Gastrocnemius medialis (tissue), 4 donors: ENCODE measurements at regions of chr19 and their contacts with region 1.

Region 1: GRCh38 chr19:46704379-46705076 is 12.4 kb downstream of the PRKD2 start:
- DNase-seq: peak; percentile 24 to 56
- ATAC-seq: peak; percentile 26 to 71
- H3K4me3 ChIP-seq: no peak overlapping the region
- H3K27ac ChIP-seq: no peak overlapping the region
- H3K4me1 ChIP-seq: no peaks in the 10 kb centered on the region
- H3K27me3 ChIP-seq: no peaks in the 10 kb centered on the region
- CTCF ChIP-seq: peak; percentile 81 to 97 (median 94)
- POLR2A ChIP-seq: no peak

Region 2: DNA sequence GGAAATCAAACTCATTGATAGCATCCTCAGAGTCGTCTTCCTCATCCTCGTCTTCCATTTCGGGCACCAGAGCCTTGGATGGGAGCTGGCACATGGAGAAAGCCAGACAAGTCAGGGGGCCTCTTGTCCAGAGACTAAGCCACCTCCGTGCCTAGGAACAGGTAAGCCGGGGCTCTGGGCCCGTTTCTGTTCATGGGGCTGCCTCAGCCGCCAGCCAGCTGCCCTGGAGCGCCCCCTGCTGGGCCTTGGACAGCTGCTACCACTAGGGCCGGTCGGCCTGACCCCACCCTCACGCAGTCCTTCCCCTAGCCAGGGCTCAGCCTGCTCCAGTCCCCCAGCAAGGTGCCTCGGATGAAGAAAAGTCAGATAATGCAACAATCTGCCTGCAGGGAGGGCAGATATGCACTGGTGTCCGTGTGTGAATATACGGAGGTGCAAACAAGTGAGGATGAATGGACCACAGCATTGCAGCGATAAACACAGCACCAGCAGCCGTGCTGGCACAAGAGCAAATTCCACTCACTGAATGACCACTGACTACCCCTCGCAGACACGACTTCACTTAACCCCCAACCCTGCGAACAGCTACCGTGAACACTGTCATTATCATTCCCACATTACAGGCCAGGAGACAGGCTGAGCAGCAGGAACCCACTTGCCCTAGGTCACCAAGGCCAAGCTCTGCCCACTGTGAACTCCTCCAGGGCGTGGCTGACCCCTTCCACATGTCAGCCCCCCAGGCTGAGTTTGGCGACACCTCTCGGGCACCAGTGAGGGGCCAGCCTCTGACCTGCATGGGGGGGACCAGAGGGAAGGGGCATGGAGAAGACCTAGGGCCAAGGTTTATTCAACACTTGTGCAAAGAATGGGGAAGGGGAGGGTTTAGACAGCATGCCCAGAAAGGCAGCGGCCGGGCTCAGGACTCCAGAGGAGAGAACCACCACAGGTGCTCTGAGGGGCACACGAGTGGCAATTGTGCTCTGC is 24.5 kb after region 1 on chr19:
- in situ Hi-C with region 1: no loop called
- intact Hi-C with region 1: loop called (anchors 1 kb)
- DNase-seq: no peak
- ATAC-seq: peak; percentile 54 to 72
- H3K4me3 ChIP-seq: no peak overlapping the region
- H3K27ac ChIP-seq: peak overlapping the region in 3 of 4 donors; percentile 60 to 63 (median 61)
- H3K4me1 ChIP-seq: peaks cover 6 to 7% of the 10 kb centered on the region in 2 donors
- H3K27me3 ChIP-seq: no peaks in the 10 kb centered on the region
- CTCF ChIP-seq: peak; percentile 83 to 95 (median 88)
- POLR2A ChIP-seq: no peak

Region 3: DNA sequence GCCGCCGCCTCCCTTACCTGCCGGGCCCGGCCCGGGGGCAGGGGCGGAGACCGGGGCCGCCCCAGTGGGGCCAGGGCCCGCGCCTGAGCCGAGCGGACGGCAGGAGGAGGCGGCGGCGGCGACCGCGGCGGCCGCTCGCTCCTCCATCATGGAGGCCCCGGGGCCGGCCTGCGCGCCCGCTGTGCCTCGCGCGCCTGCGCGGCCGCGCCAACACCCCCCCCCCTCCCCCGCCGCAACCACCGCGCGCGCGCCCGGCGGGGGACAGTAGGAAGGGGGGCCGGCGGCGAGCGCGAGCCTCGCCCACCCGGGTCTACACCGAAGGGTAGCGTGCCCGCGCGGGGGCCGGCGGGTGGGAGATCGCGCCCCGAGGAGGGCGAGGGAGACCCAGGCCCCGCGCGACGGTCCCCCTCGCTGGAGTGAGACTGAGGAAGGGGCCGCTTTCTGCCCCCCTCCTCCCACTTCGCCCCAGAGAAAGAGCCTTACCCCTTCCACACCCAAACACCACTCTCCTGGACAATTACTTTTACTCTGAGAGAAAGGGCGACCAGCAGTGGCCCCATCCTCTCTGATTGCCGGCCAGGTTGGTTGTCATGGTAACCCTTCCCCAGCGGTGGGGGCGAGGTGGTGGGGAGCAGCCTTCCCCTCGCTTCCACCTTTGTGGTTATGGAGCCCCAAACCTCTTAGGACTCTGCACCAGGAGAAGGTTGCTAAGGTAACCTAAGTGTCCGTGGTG is 41.9 kb after region 1 on chr19 and contains the start of gene STRN4:
- in situ Hi-C with region 1: no loop called
- intact Hi-C with region 1: loop called (anchors 5 kb)
- DNase-seq: no peak
- ATAC-seq: peak; percentile 74 to 78
- H3K4me3 ChIP-seq: peak within 1 kb of the TSS; percentile 87 to 100 (median 92)
- H3K27ac ChIP-seq: peak within 1 kb of the TSS; percentile 90 to 98 (median 96)
- H3K4me1 ChIP-seq: peaks cover 25 to 51% of the 10 kb centered on the region in 2 donors
- H3K27me3 ChIP-seq: no peaks in the 10 kb centered on the region
- CTCF ChIP-seq: no peak
- POLR2A ChIP-seq: peak; percentile 82 to 93
- total RNA-seq, gene STRN4: 45.5 to 75.7 (median 57.9) TPM